Activated CD4-positive, alpha-beta T cell treated with anti-CD3 and anti-CD28 coated beads, Interleukin-2, amount 10 ng/mL, durations not matched to agents 7 days and 5 days (primary cell): ENCODE measurements at regions of chr11 and their contacts with region 1.

Region 1: DNA sequence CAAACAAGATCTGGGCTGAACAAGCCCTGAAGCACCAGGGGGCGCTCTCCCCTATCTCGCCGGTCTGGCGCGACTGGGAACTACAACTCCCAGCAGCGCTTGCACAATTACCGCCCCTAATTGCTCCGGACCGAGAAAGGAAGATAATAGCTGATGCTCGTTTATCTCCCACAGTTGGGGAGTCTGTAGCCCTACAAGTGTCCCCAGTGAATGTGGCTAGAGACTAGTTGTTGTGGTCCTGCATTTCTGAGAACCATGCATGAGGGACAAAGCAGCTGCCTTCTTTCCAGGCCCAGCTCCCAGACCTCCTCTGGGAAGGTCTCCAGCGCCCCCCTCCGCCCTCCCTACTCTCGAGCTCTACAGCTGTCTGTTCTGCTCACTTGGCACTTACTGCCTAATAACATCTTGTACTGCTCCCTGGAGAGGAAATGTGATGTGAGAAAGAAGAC is 34.4 kb downstream of the NRXN2 start:
- DNase-seq: peak; percentile 94
- H3K4me3 Mint-ChIP-seq: peak overlapping the region; percentile 45
- H3K27ac Mint-ChIP-seq: peak overlapping the region; percentile 62
- H3K4me1 Mint-ChIP-seq: peaks cover 22% of the 10 kb centered on the region
- H3K27me3 Mint-ChIP-seq: peaks cover 26% of the 10 kb centered on the region

Region 2: GRCh38 chr11:64705501-64705900 is 16.9 kb after region 1 on chr11:
- CTCF ChIA-PET with region 1: interaction called, 12 read pairs
- POLR2A ChIA-PET with region 1: interaction called, 6 read pairs
- DNase-seq: no peak
- H3K4me3 Mint-ChIP-seq: no peak overlapping the region
- H3K27ac Mint-ChIP-seq: no peak overlapping the region
- H3K4me1 Mint-ChIP-seq: no peaks in the 10 kb centered on the region
- H3K27me3 Mint-ChIP-seq: peaks cover 43% of the 10 kb centered on the region